ENCODE measurements at regions of chr1 and their contacts with region 1.

Region 1: DNA sequence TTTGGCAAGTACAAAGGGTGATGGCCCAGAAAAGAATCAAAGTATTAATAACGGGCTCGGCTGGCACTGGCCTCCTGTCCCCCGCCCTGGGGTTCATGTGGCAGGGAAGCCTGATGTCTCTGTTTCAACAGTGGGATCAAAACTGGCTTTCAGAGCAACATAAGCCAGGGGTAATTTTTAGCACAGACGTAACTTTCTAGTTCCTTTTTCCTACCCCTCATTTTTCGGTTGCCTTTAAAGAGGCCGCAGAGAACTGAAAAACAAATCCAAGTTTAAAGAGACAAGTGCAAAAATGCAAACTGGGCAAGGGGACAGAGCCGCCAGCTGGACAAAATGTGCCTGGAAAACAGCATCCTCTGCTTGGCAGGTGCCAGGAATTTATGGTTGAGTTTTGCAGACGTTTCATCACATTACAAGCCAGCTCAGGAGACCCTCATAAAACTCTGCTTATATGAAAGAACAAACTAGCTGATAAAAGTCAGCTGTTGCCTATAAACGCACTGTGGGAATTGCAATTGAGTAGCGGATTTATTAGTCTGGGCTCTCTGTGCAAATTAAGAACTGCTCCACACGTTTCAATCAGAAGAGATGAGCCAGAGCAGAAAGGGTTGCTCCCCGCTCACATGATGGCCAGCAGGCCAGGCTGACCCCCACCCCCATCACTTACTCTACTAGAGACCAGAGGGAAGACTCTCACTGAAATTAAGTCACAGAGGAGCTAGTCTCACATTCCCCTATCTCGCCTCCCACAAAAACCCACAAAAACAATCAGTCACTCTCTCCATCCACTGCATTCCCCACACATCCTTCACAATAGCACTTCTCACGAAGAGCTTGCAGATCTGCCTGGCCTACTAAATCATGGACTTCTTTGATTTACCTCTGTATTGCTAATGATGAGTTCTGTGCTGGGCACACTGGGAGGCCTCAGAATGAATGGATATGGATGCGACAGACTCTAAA is 15.8 kb upstream of the CDCA8 start:
- DNase-seq: no peak

Region 2: DNA sequence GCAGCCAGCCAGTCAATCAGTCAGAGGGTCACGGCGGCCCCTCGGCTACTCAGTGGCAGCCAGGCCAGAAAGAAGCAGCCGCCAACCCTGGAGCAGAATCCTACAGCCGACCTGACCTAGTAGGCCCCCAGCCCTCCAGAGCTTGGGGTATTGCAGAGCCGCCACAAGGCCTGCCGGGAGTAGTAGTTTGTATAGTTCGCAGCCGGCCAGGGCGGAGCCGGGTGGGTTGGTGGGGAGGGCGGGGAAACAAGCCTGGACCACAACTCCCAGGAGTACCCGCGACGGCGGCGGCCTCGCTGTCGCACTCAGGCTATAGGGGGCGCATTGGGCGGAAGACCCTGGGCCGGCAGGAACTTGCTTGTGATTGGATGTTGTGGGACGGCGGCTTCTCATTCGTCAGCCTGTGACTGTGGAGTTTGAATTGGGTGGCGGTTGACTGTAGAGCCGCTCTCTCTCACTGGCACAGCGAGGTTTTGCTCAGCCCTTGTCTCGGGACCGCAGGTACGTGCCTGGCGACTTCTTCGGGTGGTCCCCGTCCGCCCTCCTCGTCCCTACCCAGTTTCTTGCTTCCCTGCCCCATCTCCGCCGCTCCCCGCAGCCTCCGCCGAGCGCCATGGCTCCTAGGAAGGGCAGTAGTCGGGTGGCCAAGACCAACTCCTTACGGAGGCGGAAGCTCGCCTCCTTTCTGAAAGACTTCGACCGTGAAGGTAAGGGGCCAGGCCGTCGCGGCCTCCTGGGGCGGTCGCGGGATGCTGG is 15.7 kb after region 1 on chr1 and contains the start of gene CDCA8:
- CTCF ChIA-PET with region 1: interaction called, 4 read pairs
- POLR2A ChIA-PET with region 1: interaction called, 19 read pairs
- DNase-seq: peak; percentile 95